ENCODE measurements at regions of chr12 and their contacts with region 1.

Region 1: DNA sequence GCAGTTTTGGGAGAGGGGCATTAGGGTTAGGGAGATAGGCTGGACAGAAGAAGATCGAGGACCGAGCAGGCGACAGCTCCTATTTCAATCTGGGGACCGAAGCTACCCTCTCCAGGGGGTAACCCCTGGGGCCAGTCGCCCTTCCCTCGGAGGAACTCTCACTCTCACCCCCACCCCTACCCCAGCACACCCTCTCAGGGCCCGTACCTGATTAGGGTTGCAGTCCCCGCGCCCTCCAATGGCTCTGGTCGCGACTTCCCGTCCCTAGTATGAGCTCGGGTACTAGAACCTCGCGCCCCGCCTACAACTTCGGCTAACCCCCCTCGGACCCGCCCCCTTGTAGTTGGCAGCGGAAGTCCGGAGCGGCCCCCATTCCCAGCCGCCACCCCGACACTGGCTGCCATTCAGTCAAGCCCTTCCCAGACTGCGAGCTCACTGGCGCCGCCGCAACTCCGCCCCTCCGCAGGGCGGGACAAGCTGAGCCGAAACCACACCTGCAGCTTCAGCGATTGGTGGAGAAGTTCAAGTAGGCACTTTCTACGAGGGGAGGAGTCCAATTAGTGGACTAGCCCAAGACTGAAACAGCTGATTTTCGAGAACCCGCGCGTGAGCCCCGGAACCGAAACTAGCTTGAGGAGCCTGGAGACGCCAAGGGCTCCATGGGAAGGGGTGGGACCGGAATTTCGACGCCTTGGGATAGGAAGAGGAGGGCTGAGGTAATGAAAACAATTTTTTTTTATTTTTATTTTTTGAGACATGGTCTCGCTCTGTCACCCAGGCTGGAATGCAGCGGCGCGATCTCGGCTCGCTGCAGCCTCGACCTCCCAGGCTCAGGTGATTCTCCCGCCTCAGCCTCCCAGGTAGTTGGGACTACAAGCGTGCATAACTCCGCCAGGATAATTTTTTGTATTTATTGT is at the start of gene STAT2:
- DNase-seq: peak; percentile 99 to 100
- H3K4me3 ChIP-seq: peak within 1 kb of the TSS; percentile 74 to 96
- H3K27ac ChIP-seq: peak within 1 kb of the TSS; percentile 89 to 95
- H3K4me1 ChIP-seq: peaks cover 9 to 13% of the 10 kb centered on the region in 2 donors
- H3K27me3 ChIP-seq: no peaks in the 10 kb centered on the region
- CTCF ChIP-seq: no peak
- total RNA-seq, gene STAT2: 246 TPM

Region 2: GRCh38 chr12:56315622-56316473 is 44.3 kb before region 1 on chr12 and contains the start of gene CNPY2:
- intact Hi-C with region 1: loop called (anchors 5 kb)
- DNase-seq: peak; percentile 90 to 98
- H3K4me3 ChIP-seq: peak within 1 kb of the TSS; percentile 74 to 79
- H3K27ac ChIP-seq: peak within 1 kb of the TSS; percentile 80 to 91
- H3K4me1 ChIP-seq: peaks cover 7 to 10% of the 10 kb centered on the region in 2 donors
- H3K27me3 ChIP-seq: no peaks in the 10 kb centered on the region
- CTCF ChIP-seq: peak in 2 of 3 experiments; percentile 6 to 16
- total RNA-seq, gene CNPY2: 34.6 TPM

Region 3: DNA sequence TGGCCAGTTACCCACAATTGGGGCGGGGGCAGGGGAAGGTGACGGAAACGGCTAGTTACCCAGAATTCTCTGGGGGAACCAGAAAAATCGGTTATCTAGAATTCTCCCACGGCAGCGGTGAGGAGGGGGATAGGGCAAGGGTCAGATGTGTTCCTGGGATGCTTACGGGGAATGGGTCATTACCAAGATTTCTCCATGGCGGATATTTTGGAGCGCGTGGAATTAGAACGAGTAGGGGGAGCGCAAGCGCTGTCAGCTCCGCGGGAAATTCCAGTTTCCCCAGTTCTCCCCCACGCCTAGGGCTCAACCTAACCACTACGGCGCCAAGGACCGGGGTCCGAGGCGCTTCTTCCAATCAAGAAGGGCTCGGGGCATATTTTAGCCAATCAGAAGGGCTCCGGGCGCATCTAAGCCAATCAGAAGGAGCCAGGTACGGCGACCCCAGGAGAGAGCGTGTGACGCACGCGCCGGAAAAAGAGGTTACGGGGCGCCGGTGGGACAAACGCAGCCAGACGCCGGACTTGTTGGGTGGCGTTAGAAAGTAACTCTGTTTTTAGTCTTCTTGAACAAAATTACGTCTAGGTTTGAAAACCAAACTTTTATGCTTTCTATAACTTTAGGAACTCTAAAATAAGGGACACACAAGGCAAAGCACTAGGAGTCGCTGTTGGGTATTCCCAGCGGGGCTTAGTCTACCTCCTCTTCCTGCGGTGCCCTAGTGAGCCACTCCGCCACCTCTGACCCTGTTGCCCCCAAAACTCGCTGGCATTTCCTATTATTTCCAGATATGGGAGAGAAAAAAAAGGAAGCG is 26.2 kb before region 1 on chr12 and contains the start of gene PAN2:
- intact Hi-C with region 1: loop called (anchors 1 kb)
- DNase-seq: peak; percentile 91 to 98
- H3K4me3 ChIP-seq: peak within 1 kb of the TSS; percentile 62 to 67
- H3K27ac ChIP-seq: peak within 1 kb of the TSS; percentile 94 to 99
- H3K4me1 ChIP-seq: peaks cover 3 to 6% of the 10 kb centered on the region in 2 donors
- H3K27me3 ChIP-seq: no peaks in the 10 kb centered on the region
- CTCF ChIP-seq: peak; percentile 43 to 63 (median 55)
- total RNA-seq, gene PAN2: 45.3 TPM

Region 4: GRCh38 chr12:56377310-56377988 is 17.3 kb after region 1 on chr12:
- intact Hi-C with region 1: no loop called
- DNase-seq: peak in 1 of 2 donors; percentile 15
- H3K4me3 ChIP-seq: no peak overlapping the region
- H3K27ac ChIP-seq: no peak overlapping the region
- H3K4me1 ChIP-seq: no peaks in the 10 kb centered on the region
- H3K27me3 ChIP-seq: no peaks in the 10 kb centered on the region
- CTCF ChIP-seq: no peak

Region 5: GRCh38 chr12:56448860-56449621 is 88.9 kb after region 1 on chr12 and contains the start of gene TIMELESS:
- intact Hi-C with region 1: loop called (anchors 1 kb)
- DNase-seq: peak; percentile 43 to 92
- H3K4me3 ChIP-seq: peak within 1 kb of the TSS; percentile 74 to 87
- H3K27ac ChIP-seq: peak within 1 kb of the TSS; percentile 79 to 86
- H3K4me1 ChIP-seq: no peaks in the 10 kb centered on the region
- H3K27me3 ChIP-seq: no peaks in the 10 kb centered on the region
- CTCF ChIP-seq: peak in 1 of 3 experiments; percentile 6
- total RNA-seq, gene TIMELESS: 2.0 TPM

Region 6: GRCh38 chr12:56468216-56469006 is 108.3 kb after region 1 on chr12 and contains the start of gene SPRYD4:
- intact Hi-C with region 1: loop called (anchors 1 kb)
- DNase-seq: peak; percentile 81 to 96
- H3K4me3 ChIP-seq: peak within 1 kb of the TSS; percentile 58 to 85
- H3K27ac ChIP-seq: peak within 1 kb of the TSS; percentile 78 to 90
- H3K4me1 ChIP-seq: peaks cover 0 to 16% of the 10 kb centered on the region in 2 donors
- H3K27me3 ChIP-seq: no peaks in the 10 kb centered on the region
- CTCF ChIP-seq: peak in 2 of 3 experiments; percentile 38 to 47
- total RNA-seq, gene SPRYD4: 0.43 TPM

Region 7: GRCh38 chr12:56645717-56646446 is 285.8 kb after region 1 on chr12 and contains the start of gene ATP5F1B:
- intact Hi-C with region 1: loop called (anchors 5 kb)
- DNase-seq: peak; percentile 97 to 98
- H3K4me3 ChIP-seq: peak within 1 kb of the TSS; percentile 94
- H3K27ac ChIP-seq: peak within 1 kb of the TSS; percentile 88 to 91
- H3K4me1 ChIP-seq: peaks cover 10 to 12% of the 10 kb centered on the region in 2 donors
- H3K27me3 ChIP-seq: no peaks in the 10 kb centered on the region
- CTCF ChIP-seq: no peak
- total RNA-seq, gene ATP5F1B: 197 TPM

Measured in ascending aorta (tissue), 2 donors.